Panc1 (cell line): ENCODE measurements at regions of chr17 and their contacts with region 1.

Region 1: DNA sequence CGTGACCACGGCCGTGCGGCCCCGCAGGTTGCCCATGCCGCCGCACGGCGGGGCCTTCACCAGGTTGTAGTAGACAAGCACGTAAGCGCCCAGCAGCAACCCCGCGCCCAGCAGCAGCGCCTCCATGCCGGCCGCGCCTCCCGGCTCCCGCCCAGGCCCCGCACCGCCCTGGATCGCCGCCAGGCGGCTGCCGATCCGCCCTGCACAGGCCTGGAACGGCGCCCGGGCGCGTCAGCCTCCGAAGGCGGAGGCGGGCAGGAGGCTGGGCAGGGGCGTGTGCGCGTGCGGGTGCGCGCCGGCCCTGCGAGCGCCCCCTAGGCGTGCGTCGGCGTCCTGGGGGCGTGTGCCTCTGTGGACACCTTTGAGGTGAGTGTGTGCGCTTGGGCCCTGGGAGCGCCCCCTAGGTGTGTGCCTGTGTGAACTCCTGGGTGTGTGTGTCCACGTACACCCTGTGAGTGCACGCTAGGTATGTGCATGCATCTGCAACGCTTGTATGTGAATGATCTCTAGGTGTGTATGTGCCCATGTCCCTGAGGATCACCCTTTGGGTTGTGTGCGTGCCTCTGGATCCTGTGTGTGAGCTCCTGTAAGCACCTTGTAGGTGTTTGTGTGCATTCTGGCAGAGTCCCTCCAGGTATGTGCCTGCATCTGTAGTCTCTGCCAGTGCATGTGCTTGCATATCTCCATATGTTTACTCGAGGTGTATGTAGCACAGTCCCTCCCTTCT is at the start of gene DHRS13:
- DNase-seq: peak; percentile 57
- ATAC-seq: peak; percentile 97
- H3K4me3 ChIP-seq: peak within 1 kb of the TSS; percentile 62 to 63
- H3K27ac ChIP-seq: peak within 1 kb of the TSS; percentile 48
- H3K4me1 ChIP-seq: peaks cover 7% of the 10 kb centered on the region
- H3K27me3 ChIP-seq: no peaks in the 10 kb centered on the region
- CTCF ChIP-seq: peak; percentile 100
- total RNA-seq, gene DHRS13: 5.2 TPM

Region 2: DNA sequence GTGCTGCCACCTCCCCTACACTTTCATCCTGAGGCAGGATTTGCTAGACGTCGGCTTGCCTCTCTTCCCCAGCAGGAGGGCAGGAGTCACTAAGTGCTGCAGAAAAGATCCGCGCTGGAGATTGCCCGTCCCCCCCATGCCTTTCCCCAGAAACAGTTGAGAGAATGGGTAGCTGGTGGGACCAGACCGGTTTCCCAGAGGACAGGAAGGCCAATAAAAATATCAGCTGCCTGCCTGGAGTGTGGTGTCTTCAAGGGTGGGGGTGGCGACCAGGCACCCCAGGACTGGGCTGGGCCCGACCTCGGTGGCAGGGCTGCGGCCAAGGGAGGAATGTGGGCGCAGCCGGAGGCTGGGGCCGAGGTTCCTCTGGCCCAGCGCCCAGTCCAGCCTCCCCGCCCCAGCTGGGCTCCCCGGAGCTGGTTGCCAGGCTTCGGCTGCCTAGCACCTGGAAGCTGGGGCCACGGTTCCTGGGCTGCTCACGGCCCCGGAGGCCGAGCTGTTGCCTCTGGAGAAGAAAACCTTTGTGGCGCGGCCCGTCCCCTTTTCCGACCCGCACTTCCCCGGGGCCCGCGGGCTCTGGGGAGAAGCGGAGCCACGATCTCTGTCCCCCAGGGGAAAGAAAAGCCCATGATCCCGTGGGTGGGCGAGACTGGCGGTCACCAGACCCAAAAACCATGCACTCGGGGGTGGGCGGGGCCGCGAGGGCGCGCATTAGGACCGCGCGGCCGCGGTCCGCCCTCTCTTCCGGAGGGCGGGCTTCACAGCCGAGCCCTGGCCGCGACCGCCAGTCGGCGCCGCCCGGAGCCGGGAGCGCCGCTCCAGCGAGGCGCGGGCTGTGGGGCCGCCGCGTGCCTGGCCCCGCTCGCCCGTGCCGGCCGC is 159.5 kb before region 1 on chr17 and contains the start of gene TRAF4:
- CTCF ChIA-PET with region 1: no interaction called
- POLR2A ChIA-PET with region 1: interaction called, 14 read pairs
- in situ Hi-C with region 1: no loop called
- intact Hi-C with region 1: no loop called
- DNase-seq: no peak
- ATAC-seq: peak; percentile 85
- H3K4me3 ChIP-seq: peak within 1 kb of the TSS; percentile 89 to 99
- H3K27ac ChIP-seq: peak within 1 kb of the TSS; percentile 99
- H3K4me1 ChIP-seq: peaks cover 39% of the 10 kb centered on the region
- H3K27me3 ChIP-seq: no peaks in the 10 kb centered on the region
- CTCF ChIP-seq: no peak
- total RNA-seq, gene TRAF4: 108 TPM

Region 3: DNA sequence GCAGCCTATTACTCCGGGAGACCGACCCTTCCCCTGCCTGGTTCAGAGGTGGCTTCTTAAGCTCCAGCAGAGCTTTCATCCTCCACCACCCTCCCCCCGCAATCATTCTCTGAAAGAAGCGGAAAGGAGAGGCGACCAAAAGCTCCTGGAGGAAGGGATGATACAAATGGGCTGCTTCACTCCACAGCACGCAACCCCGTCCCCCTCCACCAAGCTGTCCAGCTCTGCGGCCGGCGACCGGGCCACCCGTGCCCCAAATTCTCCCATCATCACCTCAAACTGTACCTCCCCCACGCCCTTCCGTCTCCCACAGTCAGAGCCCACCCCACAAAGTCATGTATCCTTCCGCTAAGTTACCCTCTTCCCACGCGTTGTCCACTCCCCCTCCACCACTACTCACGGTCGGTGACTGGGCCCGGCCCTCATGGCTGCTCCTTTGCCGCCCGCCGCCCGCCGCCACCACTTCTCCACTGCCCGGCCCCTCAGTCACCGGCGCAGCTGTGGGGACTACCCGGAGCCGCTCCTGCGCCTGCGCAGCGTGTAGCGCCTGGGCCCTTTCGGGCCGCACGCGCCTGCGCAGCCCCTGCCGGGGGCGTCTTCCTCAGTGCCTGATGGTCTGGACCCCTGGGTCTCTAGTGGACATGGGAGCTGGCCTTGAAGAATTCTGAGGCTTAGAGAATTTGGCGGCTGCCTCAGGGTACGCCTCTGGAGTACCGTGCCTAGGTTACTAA is 60.5 kb before region 1 on chr17 and contains the start of gene FAM222B:
- CTCF ChIA-PET with region 1: no interaction called
- POLR2A ChIA-PET with region 1: no interaction called
- in situ Hi-C with region 1: no loop called
- intact Hi-C with region 1: loop called (anchors 10 kb)
- DNase-seq: no peak
- ATAC-seq: peak; percentile 99
- H3K4me3 ChIP-seq: peak within 1 kb of the TSS; percentile 82 to 85
- H3K27ac ChIP-seq: peak within 1 kb of the TSS; percentile 96
- H3K4me1 ChIP-seq: peaks cover 5% of the 10 kb centered on the region; the same call in 1 of the 2 replicates
- H3K27me3 ChIP-seq: no peaks in the 10 kb centered on the region
- CTCF ChIP-seq: no peak
- total RNA-seq, gene FAM222B: 38.5 TPM